Dorsolateral prefrontal cortex (tissue), 120 donors: ENCODE measurements at regions of chr11 and their contacts with region 1.

Region 1: DNA sequence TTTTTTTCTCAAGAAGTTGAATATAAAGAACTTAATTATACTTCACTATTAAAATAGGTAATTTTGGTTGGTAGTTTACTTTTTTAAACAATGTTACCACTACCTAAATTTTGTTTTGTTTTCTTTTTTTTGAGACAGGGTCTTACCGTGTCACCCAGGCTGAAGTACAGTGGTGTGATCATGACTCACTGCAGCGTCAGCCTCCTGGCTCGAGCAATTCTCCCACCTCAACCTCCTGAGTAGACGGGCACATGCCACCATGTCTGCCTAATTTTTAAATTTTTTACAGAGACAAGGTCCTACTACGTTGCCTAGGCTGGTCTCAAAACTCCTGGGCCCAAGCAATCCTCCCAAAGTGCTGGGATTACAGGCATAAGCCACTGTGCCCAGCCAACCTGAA is 17.6 kb downstream of the SPCS2 start:
- DNase-seq: no peak
- H3K4me3 ChIP-seq: no peak overlapping the region
- H3K27ac ChIP-seq: no peak overlapping the region
- H3K27me3 ChIP-seq: no peaks in the 10 kb centered on the region
- CTCF ChIP-seq: no peak

Region 2: GRCh38 chr11:74341921-74342320 is 624.7 kb before region 1 on chr11:
- intact Hi-C with region 1: no loop called
- DNase-seq: no peak
- H3K4me3 ChIP-seq: no peak overlapping the region
- H3K27ac ChIP-seq: no peak overlapping the region
- H3K27me3 ChIP-seq: no peaks in the 10 kb centered on the region
- CTCF ChIP-seq: no peak

Region 3: GRCh38 chr11:74739546-74740270 is 226.9 kb before region 1 on chr11:
- intact Hi-C with region 1: no loop called
- DNase-seq: peak in 3 of 10 donors; percentile 34 to 67 (median 58)
- H3K4me3 ChIP-seq: no peak overlapping the region
- H3K27ac ChIP-seq: no peak overlapping the region
- H3K27me3 ChIP-seq: peaks cover 0 to 5% (median 0%) of the 10 kb centered on the region in 45 donors
- CTCF ChIP-seq: peak; percentile 58 to 91 (median 84)

Region 4: GRCh38 chr11:74909385-74909784 is 57.3 kb before region 1 on chr11:
- intact Hi-C with region 1: loop called in 1 of 2 experiments (anchors 10 kb)
- DNase-seq: no peak
- H3K4me3 ChIP-seq: no peak overlapping the region
- H3K27ac ChIP-seq: peak overlapping the region in 19 of 59 donors; percentile 5 to 64 (median 25)
- H3K27me3 ChIP-seq: no peaks in the 10 kb centered on the region
- CTCF ChIP-seq: no peak